ENCODE measurements at regions of chr3 and their contacts with region 1.

Region 1: GRCh38 chr3:119098619-119099222 is 47.2 kb upstream of the TEX55 start:
- DNase-seq: no peak

Region 2: DNA sequence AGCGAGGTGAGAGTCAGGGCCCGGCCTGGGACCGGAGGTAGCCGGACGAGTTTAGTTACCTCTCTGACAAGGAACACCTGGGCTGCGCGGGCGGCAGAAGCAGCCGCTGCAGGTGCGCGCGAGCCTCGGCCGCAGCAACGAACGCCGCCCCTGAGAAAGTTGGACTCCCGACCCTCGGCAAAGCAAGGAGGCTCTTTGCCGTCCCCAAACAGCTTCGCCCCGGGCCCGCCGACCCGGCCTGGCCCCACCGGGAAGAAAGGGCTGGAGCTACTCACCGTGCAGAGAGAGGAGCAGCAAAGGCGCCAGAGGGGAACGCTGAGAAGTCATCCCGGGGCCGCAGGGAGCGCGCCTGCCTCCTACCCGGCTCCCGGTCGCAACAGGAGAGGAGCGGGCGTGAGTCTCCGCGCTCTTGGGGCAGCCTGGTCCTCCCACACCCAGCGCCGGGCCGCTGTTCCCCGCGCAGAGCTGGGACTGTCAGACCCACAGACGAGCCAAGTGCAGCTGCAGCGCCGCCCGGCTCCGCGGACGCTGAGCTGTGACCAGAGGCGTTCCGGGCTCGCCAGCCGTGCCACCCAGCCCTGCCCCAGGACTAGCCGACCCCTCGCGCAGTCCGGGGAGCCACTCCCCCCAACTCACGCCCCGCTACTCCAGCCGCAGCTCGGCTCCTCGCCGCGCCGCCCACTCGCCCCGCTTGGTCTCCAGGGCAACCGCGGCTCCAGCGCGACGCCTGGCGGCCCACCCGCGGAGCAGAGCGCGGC is 64.3 kb before region 1 on chr3 and contains the start of gene IGSF11:
- intact Hi-C with region 1: loop called (anchors 2 kb)
- DNase-seq: peak; percentile 80 to 98 (median 88)

Region 3: GRCh38 chr3:119069725-119070124 is 29.0 kb before region 1 on chr3:
- intact Hi-C with region 1: no loop called
- DNase-seq: no peak

Region 4: GRCh38 chr3:119240591-119241434 is 142.1 kb after region 1 on chr3 and contains the start of gene B4GALT4:
- intact Hi-C with region 1: loop called (anchors 2 kb)
- DNase-seq: peak; percentile 66 to 98 (median 81)